Heart left ventricle (tissue), 16 donors: ENCODE measurements at regions of chr22 and their contacts with region 1.

Region 1: GRCh38 chr22:45645526-45646414 is 25.9 kb upstream of the ATXN10 start:
- DNase-seq: peak; percentile 59 to 86 (median 71)
- ATAC-seq: peak; percentile 63 to 95 (median 90)
- H3K4me3 ChIP-seq: no peak overlapping the region
- H3K27ac ChIP-seq: no peak overlapping the region
- H3K4me1 ChIP-seq: peaks cover 0 to 9% (median 3%) of the 10 kb centered on the region in 12 donors
- H3K27me3 ChIP-seq: peaks cover 0 to 47% (median 11%) of the 10 kb centered on the region in 9 donors
- CTCF ChIP-seq: peak; percentile 89 to 97 (median 92)
- POLR2A ChIP-seq: no peak

Region 2: DNA sequence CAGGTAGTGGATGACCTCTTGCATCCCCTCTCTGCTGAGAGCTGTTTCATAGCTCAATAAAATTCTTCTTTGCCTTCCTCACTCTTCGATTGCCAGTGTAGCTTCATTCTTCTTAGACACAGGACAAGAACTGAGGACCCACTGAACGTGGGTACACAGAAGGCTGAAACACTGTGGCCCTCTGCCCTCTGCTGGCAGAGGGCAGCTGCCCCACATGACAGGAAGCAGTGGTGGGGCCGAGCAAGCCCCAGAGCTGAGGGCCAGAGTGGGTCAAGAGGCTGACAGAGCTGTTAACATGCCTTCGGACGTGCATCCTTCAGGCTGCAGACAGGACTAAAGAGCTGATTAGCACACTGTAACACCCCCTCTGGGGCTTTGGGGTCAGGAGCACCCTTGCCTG is 248.0 kb before region 1 on chr22:
- intact Hi-C with region 1: no loop called
- DNase-seq: no peak
- ATAC-seq: no peak
- H3K4me3 ChIP-seq: no peak overlapping the region
- H3K27ac ChIP-seq: no peak overlapping the region
- H3K4me1 ChIP-seq: no peaks in the 10 kb centered on the region
- H3K27me3 ChIP-seq: peaks cover 0 to 4% (median 0%) of the 10 kb centered on the region in 9 donors
- CTCF ChIP-seq: peak in 3 of 12 donors; percentile 6 to 31 (median 28)
- POLR2A ChIP-seq: no peak

Region 3: DNA sequence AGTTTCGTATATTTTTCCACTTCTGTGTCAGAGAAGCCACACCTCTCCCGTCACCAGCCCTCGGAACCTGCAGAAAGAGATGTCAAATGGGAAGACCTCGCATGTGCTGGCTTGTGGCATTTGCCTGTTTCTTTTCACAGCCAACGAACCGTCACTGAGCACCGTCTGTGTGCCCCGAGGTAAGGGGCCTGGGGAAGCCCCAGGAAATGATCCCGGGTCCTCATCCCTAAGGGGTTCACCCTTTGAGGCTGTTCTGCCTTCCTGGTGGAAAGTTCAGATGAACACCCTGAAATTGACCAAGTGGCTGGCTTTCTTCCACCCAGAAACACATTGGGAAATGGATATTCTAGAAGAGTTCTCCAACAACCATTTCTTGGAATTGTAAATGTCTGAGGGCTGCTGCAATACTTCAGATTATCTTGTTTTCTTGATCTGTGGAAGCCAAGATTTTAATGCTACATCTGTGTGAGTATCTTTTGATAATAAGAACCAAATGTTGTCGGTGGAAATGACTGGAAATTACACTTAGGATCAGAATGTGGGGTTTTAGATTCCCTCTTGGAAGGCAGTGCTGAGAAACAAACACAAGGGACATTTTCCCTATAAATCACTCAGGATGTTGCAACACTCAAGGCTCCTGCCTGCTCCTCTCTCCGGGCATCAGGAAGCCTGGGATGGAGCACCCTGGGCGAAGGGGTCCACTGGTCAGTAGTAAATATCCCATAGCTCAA is 194.7 kb before region 1 on chr22:
- intact Hi-C with region 1: no loop called
- DNase-seq: peak in 1 of 5 donors; percentile 44
- ATAC-seq: peak; percentile 22 to 78 (median 64)
- H3K4me3 ChIP-seq: no peak overlapping the region
- H3K27ac ChIP-seq: peak overlapping the region; percentile 23 to 79 (median 58)
- H3K4me1 ChIP-seq: peaks cover 0 to 28% (median 0%) of the 10 kb centered on the region in 12 donors
- H3K27me3 ChIP-seq: peaks cover 0 to 5% (median 0%) of the 10 kb centered on the region in 9 donors
- CTCF ChIP-seq: no peak
- POLR2A ChIP-seq: no peak

Region 4: DNA sequence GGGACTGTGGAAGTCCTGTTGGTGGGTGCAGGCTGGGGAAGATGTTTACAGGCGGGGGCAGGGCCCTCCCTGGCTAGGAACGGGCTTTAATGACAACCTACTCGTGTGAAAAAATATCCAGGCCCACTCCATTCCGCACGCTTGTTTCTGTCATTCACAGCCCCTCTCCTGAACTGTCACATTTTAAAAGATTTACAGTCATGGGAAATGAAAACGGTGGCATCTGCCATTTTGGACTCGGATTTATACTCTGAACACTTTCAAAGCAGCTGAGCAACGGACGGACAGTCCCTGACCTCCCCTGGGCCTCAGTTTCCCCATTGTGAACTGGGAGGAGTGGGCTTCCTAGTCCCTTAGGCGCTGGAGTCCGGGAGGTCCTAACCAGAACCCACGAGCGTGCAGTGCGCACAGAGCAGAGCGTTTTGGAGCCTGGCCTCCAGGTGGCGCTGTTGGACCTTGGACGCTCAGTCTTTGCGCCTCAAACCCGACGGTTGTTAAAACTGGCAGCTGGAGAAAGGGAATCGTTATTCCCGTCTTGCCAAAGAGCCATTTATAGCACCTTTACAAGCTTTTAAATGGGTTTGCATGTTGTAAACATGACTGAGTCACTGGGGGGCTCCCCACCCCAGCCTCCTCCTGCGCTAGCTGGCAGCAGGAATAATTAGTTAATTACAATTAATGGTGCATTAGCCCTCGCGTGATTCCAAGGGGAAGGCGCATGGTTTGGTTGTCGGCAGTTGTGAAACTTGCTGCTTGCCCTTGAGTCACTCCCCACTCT is 67.8 kb before region 1 on chr22:
- intact Hi-C with region 1: loop called in 4 of 10 experiments (anchors 1 to 5 kb)
- DNase-seq: peak; percentile 72 to 89 (median 82)
- ATAC-seq: peak; percentile 47 to 81 (median 75)
- H3K4me3 ChIP-seq: no peak overlapping the region
- H3K27ac ChIP-seq: no peak overlapping the region
- H3K4me1 ChIP-seq: peaks cover 0 to 5% (median 0%) of the 10 kb centered on the region in 12 donors
- H3K27me3 ChIP-seq: peaks cover 0 to 18% (median 8%) of the 10 kb centered on the region in 9 donors
- CTCF ChIP-seq: peak; percentile 85 to 95 (median 90)
- POLR2A ChIP-seq: no peak

Region 5: DNA sequence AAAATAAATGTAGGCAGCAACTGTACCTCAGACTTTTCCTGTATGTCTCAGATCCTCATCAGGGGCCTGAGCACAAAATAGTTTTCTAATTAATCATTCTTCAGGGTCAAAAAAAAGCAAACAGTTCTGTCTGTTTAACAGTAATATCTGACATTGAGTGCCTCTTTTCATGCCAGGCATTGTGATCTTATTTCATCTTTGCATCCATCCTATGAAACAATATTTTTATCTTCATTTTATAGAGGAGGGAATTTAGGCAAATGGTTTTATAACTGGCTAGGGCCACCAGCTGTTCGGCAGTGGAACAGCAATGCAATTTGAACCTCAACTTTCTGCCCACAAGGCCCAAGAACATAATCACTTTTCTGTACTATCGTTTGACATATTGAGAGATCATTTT is 185.6 kb after region 1 on chr22:
- intact Hi-C with region 1: loop called in 5 of 10 experiments (anchors 10 kb)
- DNase-seq: no peak
- ATAC-seq: no peak
- H3K4me3 ChIP-seq: no peak overlapping the region
- H3K27ac ChIP-seq: no peak overlapping the region
- H3K4me1 ChIP-seq: no peaks in the 10 kb centered on the region
- H3K27me3 ChIP-seq: no peaks in the 10 kb centered on the region
- CTCF ChIP-seq: peak in 9 of 12 donors; percentile 8 to 39 (median 22)
- POLR2A ChIP-seq: no peak

Region 6: DNA sequence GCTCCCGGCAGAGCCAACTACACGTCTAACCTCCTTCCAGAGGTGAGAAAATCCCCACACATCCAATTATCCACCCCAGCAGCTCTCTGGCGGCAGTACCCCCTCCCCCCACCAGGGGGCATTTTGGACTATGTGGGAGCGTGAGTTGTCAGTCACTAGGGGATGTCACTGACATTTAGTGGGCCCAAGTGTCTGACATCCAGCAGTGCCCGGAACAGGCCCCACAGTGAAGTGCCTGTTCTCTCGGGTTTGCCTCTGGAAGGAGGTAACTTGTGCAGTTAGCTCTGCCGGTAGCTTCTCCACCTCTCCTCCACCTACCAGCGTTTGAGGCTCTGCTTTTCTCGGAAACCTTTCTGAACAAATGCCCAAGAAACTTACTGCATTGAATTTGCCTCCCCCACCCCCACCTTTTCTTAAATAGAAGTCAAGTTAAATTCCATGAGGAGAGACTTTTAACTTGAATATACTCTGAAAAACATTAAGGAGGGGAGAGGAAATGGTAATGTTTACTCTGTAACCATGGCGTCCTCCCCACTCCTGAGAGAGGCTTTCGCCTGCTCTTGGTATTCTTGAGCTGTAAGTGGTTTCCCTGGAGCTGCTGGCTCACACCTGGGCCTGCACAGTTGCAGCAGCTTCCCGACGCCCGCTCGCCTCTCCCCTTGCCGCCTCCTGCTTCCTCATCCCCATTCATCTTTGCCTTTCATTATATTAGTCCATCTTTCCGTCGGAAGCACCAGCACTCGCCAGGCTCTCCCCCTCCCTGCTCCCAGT is 218.4 kb after region 1 on chr22:
- intact Hi-C with region 1: loop called in 9 of 10 experiments (anchors 2 to 10 kb)
- DNase-seq: peak; percentile 52 to 83 (median 64)
- ATAC-seq: peak; percentile 57 to 78 (median 73)
- H3K4me3 ChIP-seq: no peak overlapping the region
- H3K27ac ChIP-seq: no peak overlapping the region
- H3K4me1 ChIP-seq: peaks cover 4 to 27% (median 13%) of the 10 kb centered on the region in 12 donors
- H3K27me3 ChIP-seq: peaks cover 15 to 46% (median 27%) of the 10 kb centered on the region in 9 donors
- CTCF ChIP-seq: peak; percentile 82 to 94 (median 90)
- POLR2A ChIP-seq: no peak

Region 7: DNA sequence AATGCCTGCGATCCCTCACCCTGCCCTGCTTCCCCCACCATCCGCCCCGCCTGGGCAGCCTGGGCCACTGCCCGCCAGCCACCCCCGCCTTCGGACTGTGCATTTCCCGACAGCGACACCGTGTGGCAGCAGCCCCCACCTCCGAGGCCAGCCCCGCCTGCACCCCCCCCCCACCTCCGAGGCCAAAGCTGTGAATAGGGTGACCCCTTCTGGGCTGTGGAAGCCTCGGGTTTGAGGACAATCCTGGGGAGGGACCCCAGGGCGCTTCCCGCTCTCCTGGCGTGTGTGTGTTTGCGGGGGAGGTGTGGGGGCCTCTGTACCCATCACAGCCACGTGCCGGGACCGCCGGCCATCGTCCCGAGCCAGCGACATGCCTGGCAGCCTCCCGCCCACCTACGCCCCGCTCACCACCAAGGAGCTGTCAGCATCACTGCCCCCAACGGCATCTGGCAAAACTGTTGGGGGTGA is 470.8 kb after region 1 on chr22:
- intact Hi-C with region 1: loop called in 1 of 10 experiments (anchors 10 kb)
- DNase-seq: peak; percentile 94 to 97 (median 95)
- ATAC-seq: peak; percentile 73 to 83 (median 75)
- H3K4me3 ChIP-seq: no peak overlapping the region
- H3K27ac ChIP-seq: peak overlapping the region in 11 of 12 donors; percentile 49 to 86 (median 81)
- H3K4me1 ChIP-seq: peaks cover 19 to 68% (median 47%) of the 10 kb centered on the region in 12 donors
- H3K27me3 ChIP-seq: no peaks in the 10 kb centered on the region
- CTCF ChIP-seq: peak; percentile 57 to 99 (median 76)
- POLR2A ChIP-seq: no peak